ENCODE measurements at regions of chr6 and their contacts with region 1.

Region 1: DNA sequence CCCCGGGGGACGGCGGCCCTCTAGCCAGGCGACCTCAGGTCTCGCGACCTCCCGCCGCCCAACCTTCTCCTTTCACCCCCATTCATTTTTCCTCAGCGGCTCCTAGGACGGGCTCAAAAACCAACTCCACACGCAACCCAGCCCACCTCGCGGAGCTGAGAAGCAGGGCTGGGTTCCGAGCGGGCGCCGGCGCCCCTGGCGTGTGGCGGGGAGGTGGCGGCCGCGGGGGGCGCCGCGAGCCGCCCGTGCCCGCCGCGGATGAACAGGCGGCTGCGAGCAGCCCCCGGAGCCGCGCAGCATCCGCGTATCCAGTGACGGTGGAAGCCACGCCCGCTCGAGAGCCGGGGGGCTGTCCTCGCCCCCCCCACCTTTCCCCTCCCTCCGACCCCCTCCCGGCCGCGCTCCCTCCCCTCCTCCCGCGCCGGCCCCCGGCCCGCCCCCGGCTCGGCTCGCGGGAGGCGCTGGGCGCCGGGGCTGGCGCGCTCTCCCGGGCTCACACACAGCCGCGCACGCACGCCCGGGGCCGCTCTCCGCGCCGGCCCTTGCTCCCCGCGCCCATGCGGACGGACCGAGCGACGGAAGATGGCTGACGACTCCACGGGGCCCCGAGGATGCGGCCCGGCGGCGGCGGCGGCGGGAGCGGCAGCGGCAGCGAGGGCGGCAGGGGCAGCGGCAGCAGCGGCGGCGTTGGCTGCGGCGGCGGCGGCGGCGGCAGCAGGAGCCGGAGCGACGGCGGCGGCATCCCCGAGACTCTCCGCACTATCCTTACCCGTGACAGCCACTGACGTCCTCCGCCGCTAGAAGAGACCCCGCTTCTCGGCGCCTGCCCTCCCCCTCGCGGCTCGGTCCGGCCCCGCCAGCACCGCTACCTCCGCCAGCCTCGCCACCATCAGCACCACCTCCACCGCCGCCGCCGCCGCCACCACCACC is at the start of gene SOBP:
- DNase-seq: peak; percentile 47
- ATAC-seq: peak; percentile 69
- H3K4me3 ChIP-seq: peak within 1 kb of the TSS; percentile 93
- H3K27ac ChIP-seq: peak within 1 kb of the TSS; percentile 39
- H3K4me1 ChIP-seq: no peaks in the 10 kb centered on the region; the same call in 1 of the 2 replicates
- H3K27me3 ChIP-seq: peaks cover 15% of the 10 kb centered on the region
- CTCF ChIP-seq: no peak
- POLR2A ChIP-seq: no peak
- RAD21 ChIP-seq: no peak
- total RNA-seq, gene SOBP: 0.72 and 1.1 TPM in 2 replicates

Region 2: GRCh38 chr6:107114213-107114905 is 375.5 kb before region 1 on chr6:
- CTCF ChIA-PET with region 1: interaction called, 3 read pairs
- POLR2A ChIA-PET with region 1: no interaction called
- dilution Hi-C with region 1: no loop called
- in situ Hi-C with region 1: no loop called
- intact Hi-C with region 1: loop called (anchors 2 kb)
- DNase-seq: peak; percentile 81
- ATAC-seq: peak; percentile 86
- H3K4me3 ChIP-seq: peak overlapping the region; percentile 98
- H3K27ac ChIP-seq: peak overlapping the region; percentile 53; the same call in 1 of the 2 replicates
- H3K4me1 ChIP-seq: no peaks in the 10 kb centered on the region
- H3K27me3 ChIP-seq: peaks cover 3% of the 10 kb centered on the region; the same call in 1 of the 2 replicates
- CTCF ChIP-seq: peak; percentile 91
- POLR2A ChIP-seq: no peak
- RAD21 ChIP-seq: peak; percentile 70

Region 3: DNA sequence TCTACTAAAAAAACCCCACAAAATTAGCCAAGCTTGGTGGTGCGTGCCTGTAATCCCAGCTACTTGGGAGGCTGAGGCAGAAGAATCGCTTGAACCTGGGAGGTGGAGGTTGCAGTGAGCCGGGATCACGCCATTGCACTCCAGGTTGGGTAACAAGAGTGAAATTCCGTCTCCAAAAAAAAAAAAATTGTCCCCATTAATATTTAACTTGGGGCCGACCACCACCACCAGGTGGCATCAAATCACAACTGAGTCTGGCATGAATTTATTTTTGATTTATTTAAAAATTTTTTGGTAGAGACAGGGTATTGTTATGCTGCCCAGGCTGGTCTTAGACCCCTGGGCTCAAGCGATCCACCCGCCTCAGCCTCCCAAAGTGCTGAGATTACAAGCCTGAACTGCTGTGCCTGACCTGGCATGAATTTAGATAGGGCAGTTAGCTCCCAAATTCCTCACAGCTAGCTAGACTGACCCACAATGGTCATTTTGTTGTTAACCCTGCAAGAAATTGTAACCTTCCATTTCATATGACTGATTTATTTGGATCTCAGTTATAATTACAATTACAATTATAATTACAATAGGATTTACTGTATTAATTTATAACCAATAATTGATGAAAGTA is 357.5 kb before region 1 on chr6:
- CTCF ChIA-PET with region 1: no interaction called
- POLR2A ChIA-PET with region 1: no interaction called
- dilution Hi-C with region 1: no loop called
- in situ Hi-C with region 1: loop called (anchors 10 kb)
- intact Hi-C with region 1: loop called (anchors 2 kb)
- DNase-seq: no peak
- ATAC-seq: peak; percentile 56
- H3K4me3 ChIP-seq: no peak overlapping the region
- H3K27ac ChIP-seq: no peak overlapping the region
- H3K4me1 ChIP-seq: no peaks in the 10 kb centered on the region
- H3K27me3 ChIP-seq: no peaks in the 10 kb centered on the region
- CTCF ChIP-seq: peak; percentile 61
- POLR2A ChIP-seq: no peak
- RAD21 ChIP-seq: peak; percentile 59

Region 4: DNA sequence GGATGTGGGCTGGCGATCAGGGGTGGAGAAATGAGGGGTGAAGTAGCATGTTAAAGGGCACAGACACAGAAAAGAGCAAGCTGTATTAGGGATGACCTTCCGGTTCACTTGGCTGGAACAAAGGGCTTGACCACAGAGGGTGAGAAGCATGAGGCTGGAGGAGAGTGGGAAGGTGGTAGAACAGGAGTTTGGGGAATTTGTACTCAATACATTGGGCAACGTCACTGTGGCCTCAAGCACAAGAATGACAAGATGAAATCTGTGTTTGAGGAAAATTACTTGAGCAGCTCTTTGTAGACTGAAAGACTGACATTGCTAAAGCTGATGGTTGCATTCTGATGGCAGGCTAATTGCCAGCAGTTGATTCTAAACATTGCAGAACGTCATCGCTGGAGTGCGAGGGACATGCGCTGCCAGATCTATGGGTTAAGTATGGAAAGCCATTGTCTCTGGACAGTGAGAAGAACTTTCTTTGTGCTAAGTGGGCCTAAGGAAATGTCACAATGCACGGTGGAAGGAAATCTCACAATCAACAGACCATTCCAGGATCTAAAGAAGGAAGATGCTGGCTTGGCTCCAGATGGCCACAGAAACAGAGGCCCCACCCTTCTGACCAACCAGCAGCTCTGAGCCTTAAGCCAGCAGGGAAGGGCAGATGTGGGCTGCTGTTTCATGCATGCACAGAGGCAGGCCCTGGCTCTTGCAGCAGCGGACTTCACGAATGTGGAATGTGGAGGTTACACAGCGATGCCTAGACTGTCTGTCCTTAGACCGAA is 156.1 kb after region 1 on chr6:
- CTCF ChIA-PET with region 1: interaction called, 3 read pairs
- POLR2A ChIA-PET with region 1: no interaction called
- dilution Hi-C with region 1: no loop called
- in situ Hi-C with region 1: no loop called
- intact Hi-C with region 1: loop called (anchors 5 kb)
- DNase-seq: no peak
- ATAC-seq: peak; percentile 32
- H3K4me3 ChIP-seq: no peak overlapping the region
- H3K27ac ChIP-seq: no peak overlapping the region
- H3K4me1 ChIP-seq: no peaks in the 10 kb centered on the region; the same call in 1 of the 2 replicates
- H3K27me3 ChIP-seq: no peaks in the 10 kb centered on the region
- CTCF ChIP-seq: no peak
- POLR2A ChIP-seq: no peak
- RAD21 ChIP-seq: no peak

Region 5: GRCh38 chr6:107704347-107705013 is 214.6 kb after region 1 on chr6:
- CTCF ChIA-PET with region 1: no interaction called
- POLR2A ChIA-PET with region 1: no interaction called
- dilution Hi-C with region 1: no loop called
- in situ Hi-C with region 1: no loop called
- intact Hi-C with region 1: loop called (anchors 5 kb)
- DNase-seq: peak; percentile 68
- ATAC-seq: peak; percentile 89
- H3K4me3 ChIP-seq: no peak overlapping the region
- H3K27ac ChIP-seq: no peak overlapping the region
- H3K4me1 ChIP-seq: no peaks in the 10 kb centered on the region
- H3K27me3 ChIP-seq: 0 out of 2 replicates have a peak, but pooled peaks cover 4% of the 10 kb centered on the region
- CTCF ChIP-seq: peak; percentile 82
- POLR2A ChIP-seq: no peak
- RAD21 ChIP-seq: peak; percentile 78

Region 6: DNA sequence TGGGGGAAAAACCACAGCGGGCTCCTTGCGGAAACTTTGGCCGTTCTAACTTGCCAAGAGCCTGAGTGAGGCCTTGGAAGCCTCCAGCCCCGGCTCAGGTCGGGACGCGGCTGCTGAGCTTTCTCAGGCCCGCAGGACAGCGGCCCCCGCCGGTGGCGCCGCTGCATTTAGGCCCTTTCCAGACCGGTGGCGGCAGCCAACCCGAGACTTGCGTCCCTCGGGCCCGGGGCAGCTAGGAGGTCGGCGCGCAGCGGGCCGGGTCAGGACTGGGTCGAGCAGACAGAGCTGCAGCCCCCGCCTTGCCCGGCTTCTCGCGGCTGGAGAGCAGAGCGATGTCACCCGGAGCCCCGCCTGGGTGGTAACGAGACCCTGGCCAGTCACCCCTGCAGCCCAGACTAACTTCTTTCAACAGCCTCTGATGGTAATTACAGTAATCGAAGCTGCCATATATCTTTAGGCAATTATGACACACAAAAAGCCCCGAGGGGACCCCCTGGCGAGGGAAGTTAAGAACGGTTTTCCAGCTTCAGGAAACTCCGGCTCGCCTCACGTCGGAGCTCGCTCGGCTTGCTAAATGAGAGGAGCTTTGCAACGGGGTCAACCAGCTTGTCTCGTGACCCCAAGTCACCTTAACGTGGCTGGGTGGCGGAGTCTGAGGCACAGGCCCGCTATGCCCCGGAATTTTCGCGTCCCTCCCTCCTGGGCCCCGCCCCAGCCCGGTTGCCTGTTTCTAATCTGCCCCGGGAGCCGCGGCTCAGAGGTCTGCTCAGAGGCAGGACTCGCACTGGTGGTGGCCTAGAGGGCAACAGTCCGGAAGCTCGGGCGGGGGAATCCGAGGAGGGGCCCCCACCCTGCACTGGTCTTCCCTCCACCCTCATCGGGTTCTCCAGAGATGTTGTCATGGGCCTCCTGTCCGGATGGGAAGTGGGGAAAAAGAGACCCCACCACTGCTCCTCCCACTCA is 678.9 kb after region 1 on chr6:
- CTCF ChIA-PET with region 1: no interaction called
- POLR2A ChIA-PET with region 1: no interaction called
- dilution Hi-C with region 1: no loop called
- in situ Hi-C with region 1: no loop called
- intact Hi-C with region 1: no loop called
- DNase-seq: no peak
- ATAC-seq: peak; percentile 16; the same call in 1 of the 2 replicates
- H3K4me3 ChIP-seq: no peak overlapping the region
- H3K27ac ChIP-seq: no peak overlapping the region
- H3K4me1 ChIP-seq: no peaks in the 10 kb centered on the region; the same call in 1 of the 2 replicates
- H3K27me3 ChIP-seq: peaks cover 90% of the 10 kb centered on the region
- CTCF ChIP-seq: no peak
- POLR2A ChIP-seq: no peak
- RAD21 ChIP-seq: no peak

Region 7: GRCh38 chr6:108359901-108360882 is 870.3 kb after region 1 on chr6:
- CTCF ChIA-PET with region 1: no interaction called
- POLR2A ChIA-PET with region 1: no interaction called
- dilution Hi-C with region 1: no loop called
- in situ Hi-C with region 1: no loop called
- intact Hi-C with region 1: no loop called
- DNase-seq: peak; percentile 47
- ATAC-seq: no peak
- H3K4me3 ChIP-seq: no peak overlapping the region
- H3K27ac ChIP-seq: no peak overlapping the region
- H3K4me1 ChIP-seq: no peaks in the 10 kb centered on the region
- H3K27me3 ChIP-seq: no peaks in the 10 kb centered on the region
- CTCF ChIP-seq: no peak
- POLR2A ChIP-seq: no peak
- RAD21 ChIP-seq: no peak

Region 8: GRCh38 chr6:108592371-108593337 is 1102.8 kb after region 1 on chr6:
- CTCF ChIA-PET with region 1: no interaction called
- POLR2A ChIA-PET with region 1: no interaction called
- dilution Hi-C with region 1: no loop called
- in situ Hi-C with region 1: no loop called
- intact Hi-C with region 1: no loop called
- DNase-seq: peak; percentile 87
- ATAC-seq: peak; percentile 38
- H3K4me3 ChIP-seq: no peak overlapping the region
- H3K27ac ChIP-seq: peak overlapping the region; percentile 9; the same call in 1 of the 2 replicates
- H3K4me1 ChIP-seq: peaks cover 34% of the 10 kb centered on the region
- H3K27me3 ChIP-seq: no peaks in the 10 kb centered on the region
- CTCF ChIP-seq: no peak
- POLR2A ChIP-seq: no peak
- RAD21 ChIP-seq: no peak